ENCODE measurements at regions of chr9 and their contacts with region 1.

Region 1: DNA sequence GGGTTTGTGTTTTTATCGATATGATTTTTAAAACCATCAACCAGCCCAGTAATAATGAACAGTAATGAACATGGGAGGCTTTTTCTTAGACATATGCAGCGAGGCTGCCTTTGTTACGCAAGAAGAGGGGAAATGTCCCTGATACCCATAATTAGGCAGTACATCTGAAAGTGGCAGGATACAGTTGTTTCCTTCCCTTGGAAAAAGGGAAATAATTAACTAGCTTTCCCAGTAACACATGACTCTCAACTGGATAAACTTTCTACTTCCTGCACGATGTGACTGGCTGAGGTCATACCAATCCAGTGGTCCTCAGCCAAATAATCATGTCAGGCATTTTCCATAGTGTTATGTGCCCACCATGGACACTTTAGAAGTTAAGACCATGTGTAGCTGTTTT is 431.6 kb upstream of the C9orf72 start:
- DNase-seq: no peak
- ATAC-seq: no peak
- H3K4me3 ChIP-seq: no peak overlapping the region
- H3K27ac ChIP-seq: no peak overlapping the region
- H3K4me1 ChIP-seq: no peaks in the 10 kb centered on the region
- H3K27me3 ChIP-seq: no peaks in the 10 kb centered on the region
- CTCF ChIP-seq: no peak
- POLR2A ChIP-seq: no peak
- RAD21 ChIP-seq: no peak

Region 2: GRCh38 chr9:27945388-27945787 is 59.5 kb before region 1 on chr9:
- CTCF ChIA-PET with region 1: no interaction called
- POLR2A ChIA-PET with region 1: no interaction called
- dilution Hi-C with region 1: no loop called
- in situ Hi-C with region 1: loop called (anchors 10 kb)
- intact Hi-C with region 1: no loop called
- DNase-seq: no peak
- ATAC-seq: no peak
- H3K4me3 ChIP-seq: no peak overlapping the region
- H3K27ac ChIP-seq: no peak overlapping the region
- H3K4me1 ChIP-seq: no peaks in the 10 kb centered on the region
- H3K27me3 ChIP-seq: no peaks in the 10 kb centered on the region
- CTCF ChIP-seq: no peak
- POLR2A ChIP-seq: no peak
- RAD21 ChIP-seq: no peak